ENCODE measurements at regions of chr11 and their contacts with region 1.

Region 1: DNA sequence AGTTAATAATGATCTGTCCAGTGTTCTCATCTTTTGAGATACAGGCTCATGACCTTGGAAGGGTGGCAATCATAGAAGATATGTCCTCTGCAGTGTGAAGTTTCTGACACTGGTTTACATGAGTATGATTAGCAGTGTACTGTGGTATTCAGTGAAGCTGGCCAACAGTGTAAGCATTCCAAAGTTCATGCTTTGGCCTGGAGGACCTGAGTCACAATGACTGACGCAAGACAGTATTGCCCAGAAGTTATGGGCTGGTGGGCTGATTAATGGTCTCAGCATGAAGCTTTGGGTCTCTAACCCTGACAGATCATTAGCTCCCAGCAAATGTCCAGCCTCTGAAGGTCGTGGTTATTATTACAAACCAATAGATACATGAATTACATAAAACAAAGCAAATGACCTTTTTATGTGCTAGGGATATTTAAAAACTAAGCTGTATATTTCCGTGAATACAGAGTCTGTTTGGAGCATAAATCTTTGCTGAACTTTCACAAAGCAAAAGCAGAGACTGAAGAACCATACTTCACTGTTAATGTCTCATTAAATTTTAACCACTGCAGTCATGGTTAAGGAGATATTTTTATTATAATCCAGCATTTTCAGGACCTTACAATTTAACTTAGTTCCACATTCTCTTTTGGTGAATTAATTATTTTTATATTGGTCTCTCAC is 28.3 kb upstream of the USP47 start:
- DNase-seq: peak in 1 of 4 experiments; percentile 39
- ATAC-seq: no peak
- H3K4me3 ChIP-seq: no peak overlapping the region
- H3K27ac ChIP-seq: peak overlapping the region; percentile 23; the same call in 1 of the 3 replicates
- H3K4me1 ChIP-seq: peaks cover 8 to 29% of the 10 kb centered on the region in 2 experiments
- H3K27me3 ChIP-seq: no peaks in the 10 kb centered on the region
- CTCF ChIP-seq: no peak
- EP300 ChIP-seq: no peak
- POLR2A ChIP-seq: no peak
- RAD21 ChIP-seq: no peak

Region 2: DNA sequence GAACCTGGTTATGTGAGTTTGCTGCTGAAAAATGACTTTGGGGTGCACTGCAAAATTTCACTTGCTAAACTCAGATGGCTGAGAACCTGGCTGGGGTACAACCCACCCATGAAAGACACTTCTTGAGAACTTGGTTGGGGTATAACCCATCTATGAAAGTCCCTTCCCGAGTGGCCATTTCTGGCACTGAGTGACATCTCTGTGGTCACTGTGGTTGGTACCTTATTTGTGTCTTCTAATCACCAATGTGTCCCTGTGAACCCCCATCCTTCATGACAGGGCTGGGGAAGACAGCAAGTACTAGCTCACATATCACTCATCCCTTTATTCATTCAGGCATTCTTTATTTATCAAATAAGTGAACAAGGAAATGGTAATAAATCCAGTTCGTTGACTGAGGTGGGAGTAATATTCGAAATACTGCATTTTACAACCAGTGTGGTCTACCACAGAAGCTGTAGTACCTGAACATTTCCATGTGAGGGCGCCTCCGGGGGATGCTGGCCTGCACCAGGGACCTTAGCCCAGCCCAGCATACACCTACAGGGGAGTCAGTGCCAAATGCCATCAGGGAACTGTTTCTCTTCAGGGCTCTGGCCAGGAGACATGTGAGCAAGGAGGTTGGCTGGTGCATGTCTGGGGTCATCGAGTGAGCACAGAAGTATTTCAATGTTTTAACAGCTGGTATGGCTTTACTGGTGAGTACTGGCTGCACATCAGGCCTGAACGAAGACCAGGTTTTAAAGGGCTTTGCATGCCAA is 582.4 kb before region 1 on chr11:
- CTCF ChIA-PET with region 1: no interaction called
- POLR2A ChIA-PET with region 1: no interaction called
- in situ Hi-C with region 1: no loop called
- intact Hi-C with region 1: no loop called
- DNase-seq: peak; percentile 25 to 44 (median 36)
- ATAC-seq: peak; percentile 86
- H3K4me3 ChIP-seq: no peak overlapping the region
- H3K27ac ChIP-seq: no peak overlapping the region
- H3K4me1 ChIP-seq: no peaks in the 10 kb centered on the region
- H3K27me3 ChIP-seq: peaks cover 2 to 20% of the 10 kb centered on the region in 2 experiments; a peak in 3 of 5 replicates
- CTCF ChIP-seq: peak; percentile 50 to 67 (median 54)
- EP300 ChIP-seq: no peak
- POLR2A ChIP-seq: no peak
- RAD21 ChIP-seq: peak in 1 of 2 experiments; percentile 20; a peak in 1 of 4 replicates

Region 3: DNA sequence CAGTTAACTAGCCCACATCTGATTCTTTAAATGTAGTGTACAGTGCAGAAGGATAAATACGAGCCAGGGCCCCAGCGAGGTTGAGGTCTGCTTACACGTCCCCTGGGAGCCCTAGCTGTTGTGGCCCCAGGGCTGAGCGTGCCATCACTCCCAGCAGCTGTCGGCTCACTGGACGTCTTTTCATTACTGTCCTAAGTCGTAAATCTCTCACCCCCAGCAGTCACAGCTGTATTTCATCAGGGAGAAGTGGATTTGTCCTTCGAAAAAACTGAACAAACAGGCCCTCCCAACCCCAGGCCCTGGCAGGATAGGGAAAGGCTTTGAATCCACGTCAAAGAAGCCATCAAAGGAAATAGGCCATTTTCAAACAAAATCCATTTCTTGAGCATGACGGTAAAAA is 350.0 kb before region 1 on chr11:
- CTCF ChIA-PET with region 1: no interaction called
- POLR2A ChIA-PET with region 1: no interaction called
- in situ Hi-C with region 1: no loop called
- intact Hi-C with region 1: no loop called
- DNase-seq: no peak
- ATAC-seq: no peak; the same call in 2 of the 3 replicates
- H3K4me3 ChIP-seq: no peak overlapping the region
- H3K27ac ChIP-seq: no peak overlapping the region
- H3K4me1 ChIP-seq: no peaks in the 10 kb centered on the region
- H3K27me3 ChIP-seq: peaks cover 2 to 44% of the 10 kb centered on the region in 2 experiments; a peak in 2 of 5 replicates
- CTCF ChIP-seq: no peak
- EP300 ChIP-seq: no peak
- POLR2A ChIP-seq: no peak
- RAD21 ChIP-seq: no peak

Region 4: GRCh38 chr11:11841723-11842420 is 28.4 kb after region 1 on chr11 and contains the start of gene USP47:
- CTCF ChIA-PET with region 1: no interaction called
- POLR2A ChIA-PET with region 1: interaction called, 14 read pairs
- in situ Hi-C with region 1: no loop called
- intact Hi-C with region 1: loop called (anchors 2 kb)
- DNase-seq: peak; percentile 74 to 92 (median 78)
- ATAC-seq: peak; percentile 76
- H3K4me3 ChIP-seq: peak within 1 kb of the TSS; percentile 89
- H3K27ac ChIP-seq: peak within 1 kb of the TSS; percentile 96
- H3K4me1 ChIP-seq: peaks cover 4 to 26% of the 10 kb centered on the region in 2 experiments; a peak in 4 of 5 replicates
- H3K27me3 ChIP-seq: no peaks in the 10 kb centered on the region
- CTCF ChIP-seq: peak; percentile 43 to 60 (median 51); a peak in 4 of 6 replicates
- EP300 ChIP-seq: no peak
- POLR2A ChIP-seq: peak; percentile 94
- RAD21 ChIP-seq: peak in 1 of 2 experiments; percentile 31; a peak in 2 of 4 replicates
- polyA plus RNA-seq, gene USP47: 13.1 to 16.4 TPM

Region 5: DNA sequence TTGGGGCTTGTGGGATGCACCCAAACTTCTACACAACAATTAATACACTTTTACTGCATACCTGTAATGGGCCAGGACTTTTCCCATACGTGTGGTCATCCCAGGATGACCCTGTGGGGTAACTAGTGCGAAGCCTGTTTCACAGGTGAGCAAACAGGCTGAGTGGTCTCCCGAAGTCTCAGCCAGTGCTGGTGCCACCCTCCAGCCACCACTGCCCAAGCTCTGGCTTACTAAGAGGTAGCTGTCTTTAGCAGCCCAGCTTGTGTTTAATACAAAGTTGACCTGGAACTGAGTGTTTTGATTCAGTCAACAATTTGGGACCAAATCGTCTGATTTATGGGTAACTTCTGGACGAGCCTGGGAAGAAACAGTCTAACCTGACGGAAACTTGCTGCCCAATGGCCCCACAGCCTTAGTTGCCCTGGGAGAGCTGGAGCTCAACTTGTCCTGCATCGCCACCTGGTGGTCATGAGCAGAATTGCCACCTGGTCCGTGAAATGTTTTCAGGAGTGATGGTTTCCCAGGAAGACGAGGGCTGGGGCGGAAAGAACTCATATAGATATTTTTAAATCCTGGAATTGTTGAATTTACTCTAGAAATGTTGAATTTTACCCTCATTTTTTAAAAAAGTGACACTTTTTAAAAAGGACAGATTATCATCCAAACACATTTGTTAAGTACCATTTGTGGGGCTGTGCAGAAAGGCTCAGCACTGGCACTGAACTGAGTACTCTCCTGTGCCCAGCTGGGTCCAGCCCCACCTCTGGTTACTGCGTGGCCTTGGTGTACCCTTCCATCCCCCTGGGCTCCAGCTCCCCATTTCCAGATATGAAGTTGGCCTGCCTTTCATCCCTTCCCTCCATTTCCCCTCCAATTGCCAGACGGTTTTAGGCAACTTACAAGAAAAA is 468.4 kb after region 1 on chr11:
- CTCF ChIA-PET with region 1: no interaction called
- POLR2A ChIA-PET with region 1: no interaction called
- in situ Hi-C with region 1: loop called (anchors 10 kb)
- intact Hi-C with region 1: no loop called
- DNase-seq: peak; percentile 86 to 88 (median 87)
- ATAC-seq: peak; percentile 89
- H3K4me3 ChIP-seq: no peak overlapping the region
- H3K27ac ChIP-seq: no peak overlapping the region
- H3K4me1 ChIP-seq: peaks cover 8 to 13% of the 10 kb centered on the region in 2 experiments; a peak in 4 of 5 replicates
- H3K27me3 ChIP-seq: no peaks in the 10 kb centered on the region; a peak in 1 of 5 replicates
- CTCF ChIP-seq: peak; percentile 92 to 98 (median 98)
- EP300 ChIP-seq: no peak
- POLR2A ChIP-seq: no peak
- RAD21 ChIP-seq: peak; percentile 99

Region 6: GRCh38 chr11:13183094-13183825 is 1369.8 kb after region 1 on chr11:
- CTCF ChIA-PET with region 1: no interaction called
- POLR2A ChIA-PET with region 1: no interaction called
- in situ Hi-C with region 1: no loop called
- intact Hi-C with region 1: no loop called
- DNase-seq: peak in 2 of 4 experiments; percentile 17 to 31
- ATAC-seq: peak; percentile 73
- H3K4me3 ChIP-seq: no peak overlapping the region
- H3K27ac ChIP-seq: no peak overlapping the region
- H3K4me1 ChIP-seq: no peaks in the 10 kb centered on the region
- H3K27me3 ChIP-seq: no peaks in the 10 kb centered on the region; a peak in 1 of 5 replicates
- CTCF ChIP-seq: peak; percentile 34 to 65 (median 46); a peak in 4 of 6 replicates
- EP300 ChIP-seq: no peak
- POLR2A ChIP-seq: no peak
- RAD21 ChIP-seq: peak; percentile 68 to 69